Colonic mucosa (tissue), 4 donors: ENCODE measurements at regions of chr1 and their contacts with region 1.

Region 1: DNA sequence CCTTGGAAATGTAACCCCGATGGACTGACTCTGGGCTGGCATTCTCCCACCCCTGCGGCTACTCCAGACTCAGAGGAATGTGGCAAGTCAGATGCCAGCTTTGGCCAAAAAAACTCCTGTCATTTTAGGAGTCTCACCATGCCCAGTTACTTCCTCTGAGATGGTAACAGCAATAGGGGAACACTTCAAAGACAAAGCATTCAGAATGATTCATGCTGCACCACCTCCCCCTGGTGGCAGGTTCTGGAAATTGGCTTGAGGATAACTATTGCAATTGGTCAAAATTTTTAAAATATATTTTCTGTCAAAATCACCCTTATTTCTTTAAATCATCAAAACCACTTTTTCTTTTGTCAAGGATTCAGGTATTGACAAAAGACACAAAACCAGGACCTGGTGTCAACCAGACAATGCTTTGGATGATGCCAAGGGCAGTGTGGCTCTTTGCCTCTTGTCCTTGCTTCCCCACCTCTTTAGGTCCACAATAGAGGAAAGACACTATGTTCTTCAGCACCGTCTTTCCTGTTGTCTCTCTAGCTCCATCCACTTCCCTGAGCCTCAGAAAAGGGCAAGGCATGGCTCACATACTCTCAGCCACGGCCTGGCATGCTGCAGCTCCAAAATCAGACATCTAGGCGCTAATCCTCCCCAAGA is 9.9 kb upstream of the CDCA8 start:
- DNase-seq: peak; percentile 79
- H3K4me3 ChIP-seq: no peak overlapping the region
- H3K27ac ChIP-seq: no peak overlapping the region
- H3K4me1 ChIP-seq: no peaks in the 10 kb centered on the region
- H3K27me3 ChIP-seq: no peaks in the 10 kb centered on the region
- CTCF ChIP-seq: peak; percentile 86

Region 2: GRCh38 chr1:37458528-37458927 is 223.9 kb before region 1 on chr1:
- intact Hi-C with region 1: loop called (anchors 5 kb)
- DNase-seq: no peak
- H3K4me3 ChIP-seq: no peak overlapping the region
- H3K27ac ChIP-seq: no peak overlapping the region
- H3K4me1 ChIP-seq: no peaks in the 10 kb centered on the region
- H3K27me3 ChIP-seq: no peaks in the 10 kb centered on the region
- CTCF ChIP-seq: no peak

Region 3: DNA sequence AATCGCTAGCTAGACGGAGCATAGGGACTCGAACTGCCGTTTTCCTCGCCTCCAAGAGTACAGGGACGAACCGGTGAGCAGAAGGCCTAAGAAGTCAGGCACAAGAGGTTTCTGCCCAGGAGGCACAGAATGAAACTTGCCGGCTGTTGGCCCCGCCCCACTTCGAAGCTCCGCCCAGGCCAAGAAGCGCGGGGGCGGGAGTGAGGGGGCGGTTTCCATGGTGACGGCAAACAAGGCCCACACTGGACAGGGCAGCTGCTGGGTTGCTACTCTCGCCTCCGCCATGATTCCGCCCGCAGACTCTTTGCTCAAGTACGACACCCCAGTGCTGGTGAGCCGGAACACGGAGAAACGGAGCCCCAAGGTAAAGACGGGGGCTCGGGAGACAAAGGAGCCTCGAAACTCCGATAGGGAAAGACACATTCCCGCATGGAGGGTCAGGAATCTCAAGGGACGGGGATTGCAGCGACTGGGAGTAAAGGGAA is 125.7 kb before region 1 on chr1 and contains the start of gene DNALI1:
- intact Hi-C with region 1: loop called (anchors 5 kb)
- DNase-seq: peak; percentile 85
- H3K4me3 ChIP-seq: no peak within 1 kb of the TSS
- H3K27ac ChIP-seq: no peak within 1 kb of the TSS
- H3K4me1 ChIP-seq: peaks cover 5% of the 10 kb centered on the region
- H3K27me3 ChIP-seq: no peaks in the 10 kb centered on the region
- CTCF ChIP-seq: no peak
- total RNA-seq, gene DNALI1: 1.9 to 4.1 TPM

Region 4: GRCh38 chr1:37602750-37603694 is 79.4 kb before region 1 on chr1:
- intact Hi-C with region 1: loop called (anchors 2 kb)
- DNase-seq: no peak
- H3K4me3 ChIP-seq: no peak overlapping the region
- H3K27ac ChIP-seq: no peak overlapping the region
- H3K4me1 ChIP-seq: no peaks in the 10 kb centered on the region
- H3K27me3 ChIP-seq: no peaks in the 10 kb centered on the region
- CTCF ChIP-seq: peak; percentile 59